MCF 10A (cell line): ENCODE measurements at regions of chr3 and their contacts with region 1.

Region 1: DNA sequence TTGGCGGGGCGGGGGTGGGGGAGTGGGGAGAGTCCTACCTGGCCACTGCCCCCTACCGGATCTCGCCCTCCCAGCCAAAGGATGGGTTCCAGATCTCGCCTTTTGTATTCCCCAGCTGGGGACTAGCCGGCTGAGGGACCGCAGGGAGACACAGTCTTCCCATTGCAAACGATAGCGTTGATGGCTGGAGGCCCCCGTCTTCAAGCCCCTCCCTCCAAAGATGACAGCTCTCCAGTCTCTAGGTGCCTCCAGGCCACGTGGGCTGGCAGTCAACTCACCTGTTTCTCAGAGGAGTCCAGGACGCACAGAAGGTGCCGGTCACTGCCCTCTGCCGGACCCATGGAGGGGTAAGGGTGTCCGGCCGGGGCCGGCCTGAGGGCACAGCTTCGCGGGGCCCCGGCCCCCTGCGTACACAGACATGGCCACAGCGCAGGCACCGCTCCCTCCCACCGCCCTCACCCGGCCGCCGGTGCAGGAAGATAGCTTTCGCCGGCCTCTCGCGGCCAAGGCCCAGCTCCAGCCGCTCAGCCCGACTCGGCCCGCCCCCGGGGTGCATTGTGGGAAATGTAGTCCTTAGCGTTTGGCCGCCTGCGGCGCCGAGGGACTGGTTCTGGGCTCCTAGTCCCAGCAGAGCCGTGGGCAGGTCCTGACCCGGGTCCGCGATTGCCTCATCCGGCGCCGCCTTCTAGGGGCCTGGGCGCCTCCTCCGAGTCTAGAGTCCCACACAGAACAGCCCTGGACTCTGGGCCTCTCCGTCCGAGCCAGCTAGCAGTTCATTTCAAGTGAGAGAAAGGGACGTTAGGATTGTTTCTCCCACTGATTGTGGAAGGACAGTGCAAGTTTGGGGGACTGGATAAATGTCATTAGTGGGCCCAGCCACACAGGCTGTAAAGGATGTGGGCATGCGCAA is at the start of gene MON1A:
- DNase-seq: peak; percentile 95
- H3K4me3 Mint-ChIP-seq: peak within 1 kb of the TSS; percentile 87
- H3K27ac Mint-ChIP-seq: peak within 1 kb of the TSS; percentile 75
- H3K4me1 Mint-ChIP-seq: peaks cover 12% of the 10 kb centered on the region
- H3K27me3 Mint-ChIP-seq: no peaks in the 10 kb centered on the region
- CTCF ChIP-seq: peak; percentile 40
- total RNA-seq, gene MON1A: 9.6 and 18.6 TPM in 2 replicates

Region 2: DNA sequence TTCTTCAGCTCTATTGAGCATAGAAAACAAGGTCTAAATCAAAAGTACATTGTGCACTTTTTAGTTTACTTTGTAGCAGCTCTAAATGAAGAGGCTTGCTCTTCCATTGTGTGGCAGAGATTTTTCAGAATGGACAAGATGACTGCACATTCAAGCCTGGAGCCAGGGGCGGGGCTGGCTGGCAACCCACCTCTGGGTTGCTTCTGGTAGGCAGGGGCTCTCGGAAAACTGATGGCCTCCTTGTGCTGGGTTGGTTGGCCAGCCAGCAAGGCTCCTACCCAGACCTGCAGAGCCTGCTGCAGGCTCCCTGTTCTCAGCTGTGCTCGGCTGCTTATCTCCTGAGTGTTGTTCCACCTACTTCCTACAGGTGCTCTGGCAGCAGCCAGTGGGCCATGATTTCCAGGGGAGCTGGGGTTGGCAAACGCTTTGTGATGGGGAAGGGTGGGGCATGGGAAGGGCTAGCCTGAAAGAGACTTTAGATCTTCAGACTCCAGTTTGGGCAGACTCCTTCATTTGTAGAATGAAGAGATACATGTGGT is 366.5 kb before region 1 on chr3:
- CTCF ChIA-PET with region 1: no interaction called
- POLR2A ChIA-PET with region 1: no interaction called
- intact Hi-C with region 1: no loop called
- DNase-seq: no peak
- H3K4me3 Mint-ChIP-seq: no peak overlapping the region
- H3K27ac Mint-ChIP-seq: no peak overlapping the region
- H3K4me1 Mint-ChIP-seq: peaks cover 6% of the 10 kb centered on the region
- H3K27me3 Mint-ChIP-seq: peaks cover 43% of the 10 kb centered on the region
- CTCF ChIP-seq: no peak

Region 3: GRCh38 chr3:49899815-49900214 is 29.8 kb before region 1 on chr3:
- CTCF ChIA-PET with region 1: interaction called, 12 read pairs
- POLR2A ChIA-PET with region 1: interaction called, 20 read pairs
- intact Hi-C with region 1: no loop called
- DNase-seq: peak; percentile 54
- H3K4me3 Mint-ChIP-seq: peak overlapping the region; percentile 71
- H3K27ac Mint-ChIP-seq: peak overlapping the region; percentile 94
- H3K4me1 Mint-ChIP-seq: peaks cover 15% of the 10 kb centered on the region
- H3K27me3 Mint-ChIP-seq: no peaks in the 10 kb centered on the region
- CTCF ChIP-seq: peak; percentile 24

Region 4: DNA sequence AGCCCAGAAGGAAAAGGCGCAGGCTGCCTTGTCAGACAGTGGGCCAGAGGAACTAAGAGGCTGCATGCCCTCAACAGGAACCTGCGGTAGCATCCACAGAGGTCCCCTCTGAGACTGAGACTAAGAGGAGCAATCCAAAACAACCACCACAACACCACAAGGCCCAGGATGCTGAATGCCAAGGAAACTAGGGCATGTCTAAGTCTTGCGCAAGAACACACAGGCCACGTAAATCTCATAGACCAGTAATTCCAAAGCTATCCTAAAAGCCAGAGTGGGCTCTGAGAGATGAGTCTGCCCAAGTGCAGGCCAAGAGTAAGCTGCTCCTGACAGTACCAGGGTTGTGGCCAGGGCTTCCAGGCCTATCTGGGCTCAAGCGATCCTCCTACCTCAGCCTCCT is 12.9 kb before region 1 on chr3:
- CTCF ChIA-PET with region 1: interaction called, 5 read pairs
- POLR2A ChIA-PET with region 1: interaction called, 13 read pairs
- intact Hi-C with region 1: no loop called
- DNase-seq: no peak
- H3K4me3 Mint-ChIP-seq: no peak overlapping the region
- H3K27ac Mint-ChIP-seq: no peak overlapping the region
- H3K4me1 Mint-ChIP-seq: no peaks in the 10 kb centered on the region
- H3K27me3 Mint-ChIP-seq: no peaks in the 10 kb centered on the region
- CTCF ChIP-seq: no peak

Region 5: GRCh38 chr3:49939858-49940666 is 10.5 kb after region 1 on chr3 and contains the start of gene RBM6:
- CTCF ChIA-PET with region 1: interaction called, 4 read pairs
- POLR2A ChIA-PET with region 1: interaction called, 86 read pairs
- intact Hi-C with region 1: no loop called
- DNase-seq: peak; percentile 97
- H3K4me3 Mint-ChIP-seq: peak within 1 kb of the TSS; percentile 93
- H3K27ac Mint-ChIP-seq: peak within 1 kb of the TSS; percentile 98
- H3K4me1 Mint-ChIP-seq: peaks cover 5% of the 10 kb centered on the region
- H3K27me3 Mint-ChIP-seq: no peaks in the 10 kb centered on the region
- CTCF ChIP-seq: no peak
- total RNA-seq, gene RBM6: 58.0 and 65.8 TPM in 2 replicates